ENCODE measurements at regions of chr6 and their contacts with region 1.

Region 1: DNA sequence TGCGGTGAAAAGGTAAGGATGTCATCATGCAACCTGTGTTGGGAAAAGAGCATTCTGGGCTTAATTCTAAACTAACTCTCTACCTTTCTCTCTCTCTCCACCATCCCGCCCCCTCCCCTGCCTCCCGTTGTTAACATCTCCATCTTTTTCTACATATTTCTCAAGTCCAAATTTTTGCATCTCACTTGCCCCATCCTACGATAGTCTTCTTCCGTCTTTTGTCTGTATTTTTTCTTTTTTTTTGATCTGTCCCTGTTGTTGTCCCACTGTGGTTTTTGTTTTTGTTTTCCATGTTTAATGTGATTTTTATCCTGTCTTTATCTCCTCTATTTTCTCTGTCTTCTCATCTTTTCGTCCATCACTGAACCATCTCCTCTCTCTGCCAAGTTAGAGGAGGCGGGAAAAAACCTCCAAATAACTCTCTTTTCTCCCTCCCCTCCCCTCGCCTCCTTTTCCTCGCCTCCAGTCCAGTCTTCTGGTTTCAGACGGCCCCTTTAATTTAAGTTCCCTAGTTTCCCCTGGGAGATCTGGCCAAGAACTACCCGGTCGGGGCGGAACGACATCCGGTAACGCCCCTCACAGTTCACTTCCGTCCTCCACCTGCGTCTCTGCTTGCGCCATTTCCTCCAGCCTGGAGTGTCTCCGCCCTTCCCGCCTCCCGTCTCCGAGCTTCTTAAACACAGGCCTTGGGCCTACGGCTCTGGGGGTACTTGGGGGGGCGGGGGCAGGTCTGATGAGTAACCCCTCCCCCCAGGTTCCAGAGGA is at the start of gene NFKBIL1:
- DNase-seq: peak; percentile 89 to 99
- H3K4me3 ChIP-seq: peak within 1 kb of the TSS; percentile 58 to 67
- H3K27ac ChIP-seq: peak within 1 kb of the TSS; percentile 72 to 84
- H3K4me1 ChIP-seq: peaks cover 6 to 15% of the 10 kb centered on the region in 2 donors
- H3K27me3 ChIP-seq: no peaks in the 10 kb centered on the region
- CTCF ChIP-seq: no peak
- total RNA-seq, gene NFKBIL1: 71.5 TPM

Region 2: DNA sequence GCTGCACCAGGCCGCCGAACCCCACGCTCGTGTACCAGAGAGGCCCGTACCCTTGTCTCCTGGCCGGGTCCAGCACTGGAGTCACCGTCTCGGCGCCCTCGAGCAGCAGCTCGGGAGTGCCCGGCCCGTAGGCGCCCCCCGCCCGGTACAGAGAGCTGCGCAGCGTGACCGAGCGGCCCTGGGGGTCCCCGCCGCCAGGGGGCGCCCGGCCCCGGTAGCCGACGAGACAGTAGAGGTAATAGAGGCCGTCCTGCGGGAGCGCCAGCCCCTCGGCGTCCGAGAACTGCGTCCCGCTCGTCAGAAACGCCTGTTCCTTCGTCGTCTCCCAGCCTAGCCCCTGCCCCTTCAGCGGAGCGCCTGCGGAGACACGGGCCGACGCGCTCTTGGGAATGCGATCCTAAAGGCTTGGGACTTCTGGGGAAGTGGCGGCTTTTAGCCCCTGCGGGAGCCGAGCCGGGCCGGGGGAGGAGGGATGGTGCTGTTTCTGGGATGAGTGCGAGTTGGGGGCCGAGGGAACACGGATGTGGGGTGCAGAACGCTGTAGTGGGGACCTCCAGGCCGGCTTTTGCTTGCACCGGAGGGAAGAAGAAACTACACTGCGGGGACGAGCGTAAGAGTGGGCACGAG is 33.8 kb after region 1 on chr6:
- intact Hi-C with region 1: loop called (anchors 1 kb)
- DNase-seq: peak in 1 of 2 donors; percentile 93
- H3K4me3 ChIP-seq: peak overlapping the region; percentile 69 to 86
- H3K27ac ChIP-seq: peak overlapping the region; percentile 58 to 75
- H3K4me1 ChIP-seq: peaks cover 0 to 12% of the 10 kb centered on the region in 2 donors
- H3K27me3 ChIP-seq: no peaks in the 10 kb centered on the region
- CTCF ChIP-seq: peak; percentile 96 to 99 (median 96)

Region 3: GRCh38 chr6:31597006-31597405 is 49.9 kb after region 1 on chr6:
- intact Hi-C with region 1: loop called (anchors 1 kb)
- DNase-seq: no peak
- H3K4me3 ChIP-seq: no peak overlapping the region
- H3K27ac ChIP-seq: no peak overlapping the region
- H3K4me1 ChIP-seq: no peaks in the 10 kb centered on the region
- H3K27me3 ChIP-seq: no peaks in the 10 kb centered on the region
- CTCF ChIP-seq: peak in 1 of 3 experiments; percentile 21

Region 4: DNA sequence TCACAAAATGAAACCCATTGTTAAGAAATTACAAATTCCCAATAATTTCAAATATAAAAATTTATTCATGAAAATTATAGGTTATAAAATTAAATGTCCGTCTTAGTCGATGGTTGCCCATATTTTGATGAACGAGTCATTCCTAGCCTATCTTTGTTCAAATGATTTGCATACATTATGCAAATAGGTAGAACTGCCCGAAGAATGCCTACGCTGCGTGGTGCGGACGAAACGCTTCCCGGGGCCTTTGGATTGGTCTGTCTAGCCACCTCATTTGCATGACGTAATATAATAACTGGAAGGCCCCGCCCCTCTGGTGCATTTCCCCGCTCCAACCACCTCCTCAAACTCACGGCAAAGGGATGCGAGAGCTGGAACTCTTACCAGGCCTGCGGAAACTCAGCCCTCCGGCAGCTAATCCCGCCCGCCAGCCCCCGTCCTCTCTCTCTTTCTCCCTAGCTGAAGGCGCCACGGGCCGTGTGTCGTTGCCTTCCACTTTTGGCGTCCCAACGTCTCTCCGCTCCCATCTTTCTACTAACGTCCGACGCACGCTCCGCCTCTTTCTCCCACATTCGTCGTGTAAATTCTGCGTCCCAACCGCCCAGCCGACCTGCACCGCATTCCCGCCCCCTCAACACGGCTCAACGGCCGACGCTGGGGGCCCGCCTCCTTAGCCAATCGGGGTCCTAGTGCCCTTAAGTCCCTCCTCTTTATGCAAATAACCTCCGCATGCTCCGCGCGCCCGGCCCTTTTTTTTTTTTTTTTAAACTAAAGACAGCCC is 72.9 kb after region 1 on chr6:
- intact Hi-C with region 1: loop called (anchors 1 kb)
- DNase-seq: peak; percentile 97 to 99
- H3K4me3 ChIP-seq: peak overlapping the region; percentile 76 to 93
- H3K27ac ChIP-seq: peak overlapping the region; percentile 98 to 99
- H3K4me1 ChIP-seq: peaks cover 8 to 9% of the 10 kb centered on the region in 2 donors
- H3K27me3 ChIP-seq: no peaks in the 10 kb centered on the region
- CTCF ChIP-seq: no peak

Region 5: DNA sequence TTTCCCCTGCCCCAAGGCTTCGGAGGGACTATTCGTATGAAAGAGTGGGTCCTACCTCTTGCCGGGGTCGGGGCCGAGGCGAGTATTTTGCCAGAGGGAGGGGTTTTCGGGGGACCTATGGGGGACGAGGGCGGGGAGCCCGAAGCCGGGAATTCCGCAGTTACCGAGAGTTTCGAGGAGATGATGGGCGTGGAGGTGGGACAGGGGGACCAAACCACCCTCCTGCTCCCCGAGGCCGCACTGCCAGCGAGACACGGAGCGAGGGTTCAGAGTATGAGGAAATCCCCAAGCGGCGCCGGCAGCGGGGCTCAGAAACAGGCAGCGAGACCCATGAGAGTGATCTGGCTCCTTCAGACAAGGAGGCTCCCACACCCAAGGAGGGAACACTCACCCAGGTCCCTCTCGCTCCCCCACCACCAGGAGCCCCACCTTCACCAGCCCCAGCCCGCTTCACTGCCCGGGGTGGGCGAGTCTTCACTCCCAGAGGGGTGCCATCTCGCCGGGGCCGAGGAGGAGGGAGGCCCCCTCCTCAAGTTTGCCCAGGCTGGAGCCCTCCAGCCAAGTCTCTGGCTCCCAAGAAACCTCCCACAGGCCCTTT is 84.6 kb after region 1 on chr6:
- intact Hi-C with region 1: no loop called
- DNase-seq: no peak
- H3K4me3 ChIP-seq: no peak overlapping the region
- H3K27ac ChIP-seq: no peak overlapping the region
- H3K4me1 ChIP-seq: no peaks in the 10 kb centered on the region
- H3K27me3 ChIP-seq: no peaks in the 10 kb centered on the region
- CTCF ChIP-seq: no peak

Region 6: DNA sequence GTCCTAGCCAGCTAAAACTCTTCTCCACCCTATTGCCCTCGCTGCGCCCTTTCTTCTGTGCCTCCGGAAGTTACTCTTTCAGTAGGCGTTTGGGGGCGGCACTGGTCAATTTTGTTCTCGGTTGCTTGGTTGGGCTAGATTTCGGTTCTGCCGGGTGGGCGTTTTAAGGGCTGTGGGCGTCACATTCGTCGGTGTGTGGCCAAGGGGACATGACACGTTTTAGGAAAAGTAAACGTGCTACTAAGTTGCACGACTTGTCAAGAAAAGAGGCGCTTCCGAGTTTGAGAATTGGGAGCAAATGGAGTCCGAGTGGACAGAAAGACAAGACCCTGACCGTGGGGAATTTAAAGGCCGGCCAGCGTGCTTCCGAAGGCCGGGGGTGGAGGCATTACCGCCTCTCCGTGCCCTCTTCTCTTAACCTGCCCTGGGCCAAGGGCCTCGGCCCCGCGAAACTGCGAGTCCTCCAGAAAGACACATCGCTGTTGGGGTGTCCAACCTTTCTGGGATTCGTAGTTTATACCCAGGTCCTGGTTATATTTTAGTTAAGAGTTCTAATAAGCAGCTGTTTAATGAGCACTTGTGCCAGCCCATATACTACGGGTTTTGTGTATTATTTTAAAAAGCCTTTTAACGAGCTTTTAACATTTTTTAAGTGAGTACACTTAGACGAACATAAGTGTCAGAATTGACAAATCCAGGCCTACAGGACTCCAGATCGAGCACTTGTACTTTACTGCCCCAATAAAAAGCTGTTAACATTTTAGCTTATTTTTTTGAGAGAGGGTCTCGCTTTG is 106.0 kb after region 1 on chr6:
- intact Hi-C with region 1: loop called (anchors 2 kb)
- DNase-seq: peak; percentile 56 to 96
- H3K4me3 ChIP-seq: peak overlapping the region; percentile 70 to 86
- H3K27ac ChIP-seq: peak overlapping the region; percentile 93 to 98
- H3K4me1 ChIP-seq: peaks cover 4 to 19% of the 10 kb centered on the region in 2 donors
- H3K27me3 ChIP-seq: no peaks in the 10 kb centered on the region
- CTCF ChIP-seq: peak in 1 of 3 experiments; percentile 26

Measured in ascending aorta (tissue), 2 donors.